ENCODE measurements at regions of chr11 and their contacts with region 1.

Region 1: DNA sequence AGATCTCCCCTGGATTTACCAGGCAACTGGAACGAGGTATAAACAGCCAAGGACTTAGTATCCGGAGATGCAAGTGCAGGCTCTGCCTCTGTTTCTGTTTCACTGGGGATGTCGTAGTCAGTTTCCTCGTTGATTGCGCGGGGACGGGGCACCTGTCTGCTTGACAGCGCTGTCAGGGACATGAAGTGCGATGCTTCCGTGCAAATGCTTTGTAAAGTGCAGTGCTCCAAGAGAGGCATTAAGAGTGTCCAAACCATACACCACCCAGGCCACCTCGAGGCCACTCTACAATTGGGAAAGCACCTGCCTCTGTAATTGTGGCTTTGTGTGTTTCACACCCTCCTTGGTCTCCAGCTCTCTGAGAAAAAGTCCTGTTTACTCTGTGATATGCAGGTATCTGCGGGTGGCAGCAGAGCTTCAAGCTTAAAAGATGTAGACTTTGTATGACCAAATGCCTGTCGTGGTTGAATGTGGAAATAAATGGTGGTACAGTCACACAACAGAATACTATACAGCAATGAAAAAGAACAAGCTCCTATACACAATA is 18.6 kb upstream of the CD5 start:
- DNase-seq: peak; percentile 87
- ATAC-seq: peak; percentile 69
- H3K4me3 Mint-ChIP-seq: peak overlapping the region; percentile 50
- H3K27ac Mint-ChIP-seq: peak overlapping the region; percentile 98
- H3K4me1 Mint-ChIP-seq: peaks cover 51% of the 10 kb centered on the region
- H3K27me3 Mint-ChIP-seq: no peaks in the 10 kb centered on the region

Region 2: GRCh38 chr11:60978546-60979380 is 104.9 kb before region 1 on chr11:
- CTCF ChIA-PET with region 1: interaction called, 10 read pairs
- DNase-seq: peak; percentile 79
- ATAC-seq: peak; percentile 75
- H3K4me3 Mint-ChIP-seq: peak overlapping the region; percentile 68
- H3K27ac Mint-ChIP-seq: peak overlapping the region; percentile 90
- H3K4me1 Mint-ChIP-seq: peaks cover 84% of the 10 kb centered on the region
- H3K27me3 Mint-ChIP-seq: no peaks in the 10 kb centered on the region

Region 3: GRCh38 chr11:61041755-61042518 is 41.7 kb before region 1 on chr11:
- CTCF ChIA-PET with region 1: interaction called, 24 read pairs
- DNase-seq: peak; percentile 94
- ATAC-seq: peak; percentile 99
- H3K4me3 Mint-ChIP-seq: peak overlapping the region; percentile 74
- H3K27ac Mint-ChIP-seq: peak overlapping the region; percentile 94
- H3K4me1 Mint-ChIP-seq: peaks cover 50% of the 10 kb centered on the region
- H3K27me3 Mint-ChIP-seq: no peaks in the 10 kb centered on the region

Region 4: DNA sequence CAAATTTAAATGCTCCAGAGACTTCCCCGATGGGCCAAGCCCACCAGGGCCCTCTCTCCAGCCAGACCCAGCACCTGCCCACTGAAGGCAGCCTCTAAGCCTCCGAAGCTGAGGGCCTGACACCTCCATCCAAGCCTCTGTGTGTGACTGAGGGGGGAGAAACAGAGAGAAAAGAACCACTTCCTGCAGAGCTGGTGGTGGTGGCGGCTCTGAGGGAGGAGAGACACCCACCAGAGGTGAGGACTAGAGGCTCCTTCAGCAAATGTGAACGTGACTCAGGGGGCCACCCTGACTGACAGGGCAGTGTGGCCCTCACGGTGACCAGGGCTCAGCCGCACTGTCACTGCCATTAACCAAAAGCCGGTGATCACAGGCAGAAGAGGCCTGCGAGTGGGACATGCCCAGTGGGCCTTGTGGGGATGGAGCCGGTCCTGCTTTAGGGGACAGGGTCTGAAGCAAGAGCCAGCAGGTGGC is 12.4 kb before region 1 on chr11:
- CTCF ChIA-PET with region 1: interaction called, 20 read pairs
- DNase-seq: peak; percentile 93
- ATAC-seq: peak; percentile 96
- H3K4me3 Mint-ChIP-seq: no peak overlapping the region
- H3K27ac Mint-ChIP-seq: peak overlapping the region; percentile 90
- H3K4me1 Mint-ChIP-seq: peaks cover 67% of the 10 kb centered on the region
- H3K27me3 Mint-ChIP-seq: peaks cover 3% of the 10 kb centered on the region

Region 5: GRCh38 chr11:61111786-61112517 is 28.3 kb after region 1 on chr11:
- CTCF ChIA-PET with region 1: interaction called, 25 read pairs
- DNase-seq: peak; percentile 91
- ATAC-seq: peak; percentile 95
- H3K4me3 Mint-ChIP-seq: peak overlapping the region; percentile 62
- H3K27ac Mint-ChIP-seq: peak overlapping the region; percentile 79
- H3K4me1 Mint-ChIP-seq: peaks cover 88% of the 10 kb centered on the region
- H3K27me3 Mint-ChIP-seq: no peaks in the 10 kb centered on the region

Region 6: GRCh38 chr11:61129639-61130523 is 46.2 kb after region 1 on chr11:
- CTCF ChIA-PET with region 1: interaction called, 29 read pairs
- DNase-seq: peak; percentile 93
- ATAC-seq: peak; percentile 95
- H3K4me3 Mint-ChIP-seq: peak overlapping the region; percentile 29
- H3K27ac Mint-ChIP-seq: peak overlapping the region; percentile 13
- H3K4me1 Mint-ChIP-seq: peaks cover 11% of the 10 kb centered on the region
- H3K27me3 Mint-ChIP-seq: no peaks in the 10 kb centered on the region

Region 7: GRCh38 chr11:61181489-61181888 is 97.8 kb after region 1 on chr11:
- CTCF ChIA-PET with region 1: no interaction called
- DNase-seq: no peak
- ATAC-seq: no peak
- H3K4me3 Mint-ChIP-seq: no peak overlapping the region
- H3K27ac Mint-ChIP-seq: no peak overlapping the region
- H3K4me1 Mint-ChIP-seq: no peaks in the 10 kb centered on the region
- H3K27me3 Mint-ChIP-seq: peaks cover 6% of the 10 kb centered on the region

Measured in activated CD8-positive, alpha-beta memory T cell treated with anti-CD3 and anti-CD28 coated beads, Interleukin-2, amount 10 ng/mL, durations not matched to agents 7 days and 5 days (primary cell).